ENCODE measurements at regions of chr3 and their contacts with region 1.

Region 1: DNA sequence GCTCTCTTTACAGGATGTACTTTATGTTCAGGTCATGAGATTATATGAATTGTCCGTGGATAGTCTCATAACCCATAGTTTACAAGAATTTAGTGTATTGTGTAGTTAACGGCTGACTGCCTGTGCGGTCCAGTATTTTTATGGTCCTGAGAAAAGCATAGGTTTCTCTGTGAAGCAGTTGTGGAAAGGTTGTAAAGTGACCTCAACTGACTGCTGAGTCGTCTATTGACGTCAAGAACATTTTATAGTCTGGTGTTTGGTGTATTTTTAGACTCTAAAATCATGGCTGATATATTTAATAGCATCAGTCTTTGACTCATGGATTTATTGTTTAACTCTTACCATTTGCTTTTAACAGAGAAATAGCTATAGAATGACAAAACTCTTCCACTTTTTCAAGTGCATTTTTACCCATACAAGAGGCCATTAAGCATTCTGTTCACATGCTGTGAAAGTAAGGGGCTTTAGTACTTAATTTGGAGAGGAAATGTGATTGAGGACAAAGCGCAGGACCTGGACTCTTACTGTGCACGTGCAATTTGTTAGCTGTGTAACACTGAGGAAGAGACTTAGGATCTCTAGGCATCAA is 240.7 kb downstream of the NFKBIZ start:
- DNase-seq: no peak
- ATAC-seq: no peak
- H3K4me3 ChIP-seq: no peak overlapping the region
- H3K4me3 Mint-ChIP-seq: no peak overlapping the region
- H3K27ac ChIP-seq: no peak overlapping the region
- H3K27ac Mint-ChIP-seq: no peak overlapping the region
- H3K4me1 ChIP-seq: peaks cover 0 to 13% of the 10 kb centered on the region in 2 donors
- H3K4me1 Mint-ChIP-seq: peaks cover 12 to 51% (median 30%) of the 10 kb centered on the region in 7 donors
- H3K27me3 ChIP-seq: no peaks in the 10 kb centered on the region
- H3K27me3 Mint-ChIP-seq: peaks cover 0 to 5% (median 0%) of the 10 kb centered on the region in 5 donors

Region 2: DNA sequence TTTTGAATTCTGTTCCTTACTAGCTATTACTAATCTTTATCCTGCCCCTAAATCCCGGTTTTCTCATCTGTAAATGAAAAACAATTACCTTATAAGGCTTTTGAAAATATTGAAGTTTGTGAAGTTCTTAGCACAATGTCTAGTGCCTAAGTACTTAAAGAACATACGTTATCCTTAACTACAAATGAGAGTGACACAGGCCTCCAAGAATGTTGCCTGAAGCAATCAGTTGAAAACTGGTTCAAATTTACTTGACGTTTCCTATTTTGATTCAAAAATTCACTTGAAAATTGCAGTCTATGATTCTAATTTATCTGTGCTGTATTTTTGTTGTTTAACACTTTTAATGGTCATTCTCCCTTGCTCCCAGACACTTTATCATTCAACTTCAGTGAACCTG is 580.2 kb before region 1 on chr3:
- CTCF ChIA-PET with region 1: no interaction called
- POLR2A ChIA-PET with region 1: no interaction called
- intact Hi-C with region 1: no loop called
- DNase-seq: no peak
- ATAC-seq: no peak
- H3K4me3 ChIP-seq: no peak overlapping the region
- H3K4me3 Mint-ChIP-seq: peak overlapping the region in 9 of 10 donors; percentile 13 to 100 (median 99)
- H3K27ac ChIP-seq: no peak overlapping the region
- H3K27ac Mint-ChIP-seq: peak overlapping the region in 8 of 9 donors; percentile 13 to 98 (median 68)
- H3K4me1 ChIP-seq: peaks cover 23 to 33% of the 10 kb centered on the region in 2 donors
- H3K4me1 Mint-ChIP-seq: peaks cover 51 to 89% (median 83%) of the 10 kb centered on the region in 7 donors
- H3K27me3 ChIP-seq: no peaks in the 10 kb centered on the region
- H3K27me3 Mint-ChIP-seq: peaks cover 0 to 4% (median 0%) of the 10 kb centered on the region in 5 donors

Region 3: GRCh38 chr3:101988591-101988990 is 101.4 kb before region 1 on chr3:
- CTCF ChIA-PET with region 1: no interaction called
- POLR2A ChIA-PET with region 1: no interaction called
- intact Hi-C with region 1: loop called in 1 of 2 experiments (anchors 2 kb)
- DNase-seq: no peak
- ATAC-seq: no peak
- H3K4me3 ChIP-seq: no peak overlapping the region
- H3K4me3 Mint-ChIP-seq: peak overlapping the region in 1 of 10 donors; percentile 15
- H3K27ac ChIP-seq: no peak overlapping the region
- H3K27ac Mint-ChIP-seq: peak overlapping the region in 1 of 9 donors; percentile 62
- H3K4me1 ChIP-seq: peaks cover 0 to 6% of the 10 kb centered on the region in 2 donors
- H3K4me1 Mint-ChIP-seq: peaks cover 4 to 32% (median 16%) of the 10 kb centered on the region in 7 donors
- H3K27me3 ChIP-seq: no peaks in the 10 kb centered on the region
- H3K27me3 Mint-ChIP-seq: peaks cover 0 to 20% (median 0%) of the 10 kb centered on the region in 5 donors

Region 4: GRCh38 chr3:102106416-102107097 is 16.6 kb after region 1 on chr3:
- CTCF ChIA-PET with region 1: interaction called, 3 read pairs
- POLR2A ChIA-PET with region 1: interaction called, 3 read pairs
- intact Hi-C with region 1: loop called in 1 of 2 experiments (anchors 2 kb)
- DNase-seq: peak in 5 of 9 donors; percentile 13 to 67 (median 53)
- ATAC-seq: peak; percentile 50
- H3K4me3 ChIP-seq: no peak overlapping the region
- H3K4me3 Mint-ChIP-seq: peak overlapping the region in 9 of 10 donors; percentile 19 to 83 (median 61)
- H3K27ac ChIP-seq: no peak overlapping the region
- H3K27ac Mint-ChIP-seq: peak overlapping the region in 7 of 9 donors; percentile 0 to 88 (median 72)
- H3K4me1 ChIP-seq: peaks cover 0 to 10% of the 10 kb centered on the region in 2 donors
- H3K4me1 Mint-ChIP-seq: peaks cover 4 to 41% (median 28%) of the 10 kb centered on the region in 7 donors
- H3K27me3 ChIP-seq: no peaks in the 10 kb centered on the region
- H3K27me3 Mint-ChIP-seq: no peaks in the 10 kb centered on the region

Region 5: GRCh38 chr3:102206511-102207031 is 116.6 kb after region 1 on chr3:
- CTCF ChIA-PET with region 1: no interaction called
- POLR2A ChIA-PET with region 1: no interaction called
- intact Hi-C with region 1: no loop called
- DNase-seq: no peak
- ATAC-seq: no peak
- H3K4me3 ChIP-seq: no peak overlapping the region
- H3K4me3 Mint-ChIP-seq: no peak overlapping the region
- H3K27ac ChIP-seq: no peak overlapping the region
- H3K27ac Mint-ChIP-seq: no peak overlapping the region
- H3K4me1 ChIP-seq: no peaks in the 10 kb centered on the region
- H3K4me1 Mint-ChIP-seq: no peaks in the 10 kb centered on the region
- H3K27me3 ChIP-seq: no peaks in the 10 kb centered on the region
- H3K27me3 Mint-ChIP-seq: peaks cover 0 to 18% (median 0%) of the 10 kb centered on the region in 5 donors

Measured in naive thymus-derived CD4-positive, alpha-beta T cell (primary cell).